ENCODE measurements at regions of chr5 and their contacts with region 1.

Region 1: GRCh38 chr5:63022403-63022802 is 443.8 kb downstream of the LRRC70 start:
- DNase-seq: no peak
- ATAC-seq: no peak
- H3K4me3 ChIP-seq: no peak overlapping the region
- H3K27ac ChIP-seq: no peak overlapping the region
- H3K4me1 ChIP-seq: no peaks in the 10 kb centered on the region
- H3K27me3 ChIP-seq: no peaks in the 10 kb centered on the region
- CTCF ChIP-seq: no peak
- EP300 ChIP-seq: no peak
- POLR2A ChIP-seq: no peak
- RAD21 ChIP-seq: no peak

Region 2: GRCh38 chr5:63374063-63374462 is 351.7 kb after region 1 on chr5:
- CTCF ChIA-PET with region 1: no interaction called
- POLR2A ChIA-PET with region 1: no interaction called
- in situ Hi-C with region 1: no loop called
- intact Hi-C with region 1: loop called (anchors 5 kb)
- DNase-seq: no peak
- ATAC-seq: no peak
- H3K4me3 ChIP-seq: no peak overlapping the region
- H3K27ac ChIP-seq: no peak overlapping the region
- H3K4me1 ChIP-seq: no peaks in the 10 kb centered on the region
- H3K27me3 ChIP-seq: no peaks in the 10 kb centered on the region
- CTCF ChIP-seq: no peak
- EP300 ChIP-seq: no peak
- POLR2A ChIP-seq: no peak
- RAD21 ChIP-seq: no peak